Activated T-helper 1 cell treated with anti-CD3 and anti-CD28 coated beads, Interleukin-12 subunit alpha, Interleukin-12 subunit beta, Interleukin-2, Interleukin-4 antibody, amounts not matched to agents 30 ng/mL and 10 ng/mL and 1 ng/mL, durations not matched to agents 14 hours and 24 hours and 36 hours (primary cell): ENCODE measurements at regions of chr2 and their contacts with region 1.

Region 1: GRCh38 chr2:88739985-88740600 is 48.6 kb downstream of the RPIA start:
- DNase-seq: peak; percentile 59
- H3K4me3 Mint-ChIP-seq: no peak overlapping the region
- H3K27ac Mint-ChIP-seq: no peak overlapping the region
- H3K4me1 Mint-ChIP-seq: peaks cover 26% of the 10 kb centered on the region
- H3K27me3 Mint-ChIP-seq: no peaks in the 10 kb centered on the region

Region 2: DNA sequence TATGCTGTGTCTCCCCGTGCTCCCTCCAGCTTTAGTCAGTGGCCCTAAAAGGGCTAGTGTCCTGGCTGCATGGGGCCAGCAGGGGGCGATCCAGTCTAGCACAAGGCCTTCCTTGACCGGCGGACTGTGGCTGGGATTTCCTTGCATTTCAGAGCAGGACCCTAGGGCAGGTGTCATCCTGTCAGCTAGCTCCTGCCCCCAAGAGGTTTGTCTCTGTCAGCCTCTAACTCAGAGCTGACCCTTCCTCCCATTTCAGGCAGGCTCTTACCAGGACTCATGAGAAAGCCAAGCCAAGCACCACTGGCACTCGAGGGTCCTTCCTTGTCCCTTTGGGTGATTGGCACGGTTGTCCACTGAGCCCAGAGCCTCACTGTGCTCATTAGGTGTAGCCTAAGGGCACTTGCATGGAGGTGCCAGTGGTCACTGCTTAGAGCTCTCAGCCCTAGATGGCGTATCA is 91.7 kb after region 1 on chr2:
- intact Hi-C with region 1: loop called (anchors 1 kb)
- DNase-seq: peak; percentile 11
- H3K4me3 Mint-ChIP-seq: no peak overlapping the region
- H3K27ac Mint-ChIP-seq: no peak overlapping the region
- H3K4me1 Mint-ChIP-seq: no peaks in the 10 kb centered on the region
- H3K27me3 Mint-ChIP-seq: peaks cover 5% of the 10 kb centered on the region

Region 3: GRCh38 chr2:88874063-88874657 is 134.1 kb after region 1 on chr2:
- intact Hi-C with region 1: loop called (anchors 1 kb)
- DNase-seq: peak; percentile 31
- H3K4me3 Mint-ChIP-seq: no peak overlapping the region
- H3K27ac Mint-ChIP-seq: no peak overlapping the region
- H3K4me1 Mint-ChIP-seq: no peaks in the 10 kb centered on the region
- H3K27me3 Mint-ChIP-seq: peaks cover 17% of the 10 kb centered on the region

Region 4: DNA sequence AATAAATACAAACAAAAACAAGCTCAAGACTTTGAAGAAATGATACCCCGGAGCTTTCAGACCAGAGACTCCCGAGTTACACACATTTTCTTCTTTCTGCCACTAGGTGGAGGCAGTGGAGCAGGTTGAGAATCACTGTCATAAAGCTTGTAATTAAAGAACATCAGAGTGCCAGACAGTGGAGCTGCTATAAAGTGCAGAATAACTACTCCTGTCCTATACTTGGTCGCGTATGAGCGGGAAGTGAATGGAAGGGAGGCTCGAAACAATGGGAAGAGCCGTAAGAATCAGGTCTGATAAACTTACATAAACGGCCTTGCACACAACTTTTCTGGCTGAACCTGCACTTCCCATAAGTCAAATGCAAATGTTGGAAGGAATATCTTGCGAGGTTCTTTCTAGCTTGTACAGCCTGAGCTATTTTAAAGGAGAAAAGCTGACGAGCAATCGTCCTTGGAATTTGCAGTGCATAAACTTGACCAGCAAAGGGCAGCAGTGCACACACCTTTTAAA is 140.4 kb after region 1 on chr2:
- intact Hi-C with region 1: loop called (anchors 1 kb)
- DNase-seq: no peak
- H3K4me3 Mint-ChIP-seq: no peak overlapping the region
- H3K27ac Mint-ChIP-seq: no peak overlapping the region
- H3K4me1 Mint-ChIP-seq: no peaks in the 10 kb centered on the region
- H3K27me3 Mint-ChIP-seq: peaks cover 15% of the 10 kb centered on the region

Region 5: GRCh38 chr2:88919087-88919738 is 179.1 kb after region 1 on chr2:
- intact Hi-C with region 1: loop called (anchors 1 kb)
- DNase-seq: no peak
- H3K4me3 Mint-ChIP-seq: no peak overlapping the region
- H3K27ac Mint-ChIP-seq: no peak overlapping the region
- H3K4me1 Mint-ChIP-seq: no peaks in the 10 kb centered on the region
- H3K27me3 Mint-ChIP-seq: peaks cover 21% of the 10 kb centered on the region